ENCODE measurements at regions of chr16 and their contacts with region 1.

Region 1: GRCh38 chr16:23556881-23557778 is at the starts of genes EARS2 and UBFD1:
- DNase-seq: peak; percentile 99
- ATAC-seq: peak; percentile 87
- H3K4me3 ChIP-seq: peak within 1 kb of the TSS; percentile 60 to 90 (median 86)
- H3K4me3 Mint-ChIP-seq: peak within 1 kb of the TSS; percentile 93
- H3K27ac ChIP-seq: peak within 1 kb of the TSS; percentile 70 to 74
- H3K27ac Mint-ChIP-seq: peak within 1 kb of the TSS; percentile 93
- H3K4me1 ChIP-seq: peaks cover 11 to 20% of the 10 kb centered on the region in 2 donors
- H3K4me1 Mint-ChIP-seq: peaks cover 34% of the 10 kb centered on the region
- H3K27me3 ChIP-seq: no peaks in the 10 kb centered on the region
- H3K27me3 Mint-ChIP-seq: no peaks in the 10 kb centered on the region
- CTCF ChIP-seq: peak; percentile 79
- total RNA-seq, gene EARS2: 14.6 and 14.7 TPM in 2 replicates
- total RNA-seq, gene UBFD1: 47.3 and 49.2 TPM in 2 replicates

Region 2: GRCh38 chr16:23452572-23453337 is 104.4 kb before region 1 on chr16 and contains the start of gene COG7:
- CTCF ChIA-PET with region 1: no interaction called
- POLR2A ChIA-PET with region 1: no interaction called
- intact Hi-C with region 1: loop called (anchors 1 kb)
- DNase-seq: peak; percentile 92
- ATAC-seq: peak; percentile 90
- H3K4me3 ChIP-seq: peak within 1 kb of the TSS; percentile 67 to 99 (median 89)
- H3K4me3 Mint-ChIP-seq: peak within 1 kb of the TSS; percentile 91
- H3K27ac ChIP-seq: peak within 1 kb of the TSS in 1 of 2 donors; percentile 67
- H3K27ac Mint-ChIP-seq: peak within 1 kb of the TSS; percentile 90
- H3K4me1 ChIP-seq: peaks cover 11 to 13% of the 10 kb centered on the region in 2 donors
- H3K4me1 Mint-ChIP-seq: peaks cover 24% of the 10 kb centered on the region
- H3K27me3 ChIP-seq: no peaks in the 10 kb centered on the region
- H3K27me3 Mint-ChIP-seq: no peaks in the 10 kb centered on the region
- CTCF ChIP-seq: no peak
- total RNA-seq, gene COG7: 21.3 and 23.3 TPM in 2 replicates

Region 3: GRCh38 chr16:23504451-23505179 is 52.5 kb before region 1 on chr16:
- CTCF ChIA-PET with region 1: interaction called, 13 read pairs
- POLR2A ChIA-PET with region 1: interaction called, 9 read pairs
- intact Hi-C with region 1: loop called (anchors 1 kb)
- DNase-seq: peak; percentile 66
- ATAC-seq: peak; percentile 56
- H3K4me3 ChIP-seq: peak overlapping the region in 4 of 5 experiments; percentile 1 to 91 (median 78)
- H3K4me3 Mint-ChIP-seq: peak overlapping the region; percentile 94
- H3K27ac ChIP-seq: peak overlapping the region; percentile 86 to 91
- H3K27ac Mint-ChIP-seq: peak overlapping the region; percentile 90
- H3K4me1 ChIP-seq: peaks cover 85 to 94% of the 10 kb centered on the region in 2 donors
- H3K4me1 Mint-ChIP-seq: peaks cover 87% of the 10 kb centered on the region
- H3K27me3 ChIP-seq: no peaks in the 10 kb centered on the region
- H3K27me3 Mint-ChIP-seq: no peaks in the 10 kb centered on the region
- CTCF ChIP-seq: no peak

Region 4: DNA sequence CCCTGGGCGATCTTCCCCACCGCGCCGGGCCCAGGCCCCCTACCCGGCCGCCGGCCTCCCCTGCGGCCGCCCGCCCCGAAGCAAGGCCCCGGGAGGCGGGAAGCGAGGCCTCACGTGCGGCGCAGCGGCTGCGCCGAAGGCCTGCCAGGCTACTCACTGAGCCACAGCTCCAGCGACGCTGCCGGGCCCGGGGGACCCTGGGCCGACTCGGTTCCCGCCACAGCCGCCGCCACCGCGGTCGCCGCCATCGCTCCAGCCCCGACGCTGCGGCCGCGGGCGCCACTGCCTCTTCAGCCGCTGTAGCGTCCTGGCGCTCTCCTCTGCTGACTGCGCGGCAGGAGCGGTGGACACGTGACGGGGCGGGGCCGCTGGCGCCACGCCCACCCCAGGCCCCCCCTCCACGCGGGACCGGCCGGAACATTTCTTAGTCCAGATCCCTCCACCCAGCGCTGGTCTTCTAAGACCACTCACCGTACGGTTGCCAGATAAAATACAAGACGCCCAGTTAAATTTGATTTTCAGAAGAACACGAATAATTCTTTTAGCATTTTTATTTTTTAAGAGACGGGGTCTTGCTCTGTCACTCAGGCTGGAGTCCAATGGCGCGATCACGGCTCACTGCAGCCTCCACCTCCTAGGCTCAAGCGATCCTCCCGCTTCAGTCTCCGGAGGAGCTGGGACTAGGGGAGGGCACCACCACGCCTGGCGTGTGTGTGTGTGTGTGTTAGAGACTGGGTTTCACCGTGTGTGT is 46.8 kb before region 1 on chr16 and contains the start of gene GGA2:
- CTCF ChIA-PET with region 1: interaction called, 13 read pairs
- POLR2A ChIA-PET with region 1: interaction called, 9 read pairs
- intact Hi-C with region 1: loop called (anchors 1 kb)
- DNase-seq: peak; percentile 91
- ATAC-seq: peak; percentile 78
- H3K4me3 ChIP-seq: peak within 1 kb of the TSS; percentile 75 to 95 (median 91)
- H3K4me3 Mint-ChIP-seq: peak within 1 kb of the TSS; percentile 94
- H3K27ac ChIP-seq: peak within 1 kb of the TSS; percentile 86 to 91
- H3K27ac Mint-ChIP-seq: peak within 1 kb of the TSS; percentile 90
- H3K4me1 ChIP-seq: peaks cover 29 to 49% of the 10 kb centered on the region in 2 donors
- H3K4me1 Mint-ChIP-seq: peaks cover 55% of the 10 kb centered on the region
- H3K27me3 ChIP-seq: no peaks in the 10 kb centered on the region
- H3K27me3 Mint-ChIP-seq: no peaks in the 10 kb centered on the region
- CTCF ChIP-seq: no peak
- total RNA-seq, gene GGA2: 832 and 865 TPM in 2 replicates

Region 5: GRCh38 chr16:23640931-23641765 is 84.0 kb after region 1 on chr16 and contains the starts of genes DCTN5 and PALB2:
- CTCF ChIA-PET with region 1: interaction called, 5 read pairs
- POLR2A ChIA-PET with region 1: no interaction called
- intact Hi-C with region 1: loop called (anchors 1 kb)
- DNase-seq: peak; percentile 91
- ATAC-seq: peak; percentile 95
- H3K4me3 ChIP-seq: peak within 1 kb of the TSS; percentile 89 to 100 (median 96)
- H3K4me3 Mint-ChIP-seq: peak within 1 kb of the TSS; percentile 99
- H3K27ac ChIP-seq: peak within 1 kb of the TSS; percentile 80 to 84
- H3K27ac Mint-ChIP-seq: peak within 1 kb of the TSS; percentile 98
- H3K4me1 ChIP-seq: peaks cover 13 to 20% of the 10 kb centered on the region in 2 donors
- H3K4me1 Mint-ChIP-seq: peaks cover 36% of the 10 kb centered on the region
- H3K27me3 ChIP-seq: no peaks in the 10 kb centered on the region
- H3K27me3 Mint-ChIP-seq: no peaks in the 10 kb centered on the region
- CTCF ChIP-seq: no peak
- total RNA-seq, gene DCTN5: 58.3 and 62.3 TPM in 2 replicates
- total RNA-seq, gene PALB2: 14.9 and 16.3 TPM in 2 replicates

Region 6: DNA sequence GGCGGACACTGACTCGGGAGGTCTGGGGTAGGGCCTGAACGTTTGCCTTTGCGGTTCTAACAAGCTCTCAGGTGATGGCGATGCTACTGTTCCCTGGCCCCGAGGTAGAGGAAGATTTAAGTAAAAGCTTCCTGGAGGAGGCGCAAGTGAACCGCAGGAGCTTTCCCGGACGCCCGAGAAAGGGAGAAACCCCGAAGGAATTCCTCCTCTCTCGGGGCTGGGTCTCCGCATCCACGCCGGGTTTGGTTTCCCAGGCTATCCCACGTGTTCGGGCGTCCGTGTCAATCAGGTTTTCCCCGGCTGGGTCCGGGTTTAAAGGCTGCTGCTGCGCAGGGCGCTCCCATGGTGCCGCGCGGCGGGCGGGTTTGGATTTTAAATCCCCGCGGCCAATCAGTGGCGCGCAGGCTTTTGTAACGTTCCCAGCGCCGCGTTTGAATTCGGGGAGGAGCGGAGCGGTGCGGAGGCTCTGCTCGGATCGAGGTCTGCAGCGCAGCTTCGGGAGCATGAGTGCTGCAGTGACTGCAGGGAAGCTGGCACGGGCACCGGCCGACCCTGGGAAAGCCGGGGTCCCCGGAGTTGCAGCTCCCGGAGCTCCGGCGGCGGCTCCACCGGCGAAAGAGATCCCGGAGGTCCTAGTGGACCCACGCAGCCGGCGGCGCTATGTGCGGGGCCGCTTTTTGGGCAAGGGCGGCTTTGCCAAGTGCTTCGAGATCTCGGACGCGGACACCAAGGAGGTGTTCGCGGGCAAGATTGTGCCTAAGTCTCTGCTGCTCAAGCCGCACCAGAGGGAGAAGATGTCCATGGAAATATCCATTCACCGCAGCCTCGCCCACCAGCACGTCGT is 121.5 kb after region 1 on chr16 and contains the start of gene PLK1:
- CTCF ChIA-PET with region 1: no interaction called
- POLR2A ChIA-PET with region 1: no interaction called
- intact Hi-C with region 1: no loop called
- DNase-seq: peak; percentile 66
- ATAC-seq: peak; percentile 87
- H3K4me3 ChIP-seq: peak within 1 kb of the TSS; percentile 56 to 73 (median 64)
- H3K4me3 Mint-ChIP-seq: peak within 1 kb of the TSS; percentile 90
- H3K27ac ChIP-seq: no peak within 1 kb of the TSS
- H3K27ac Mint-ChIP-seq: no peak within 1 kb of the TSS
- H3K4me1 ChIP-seq: peaks cover 12 to 15% of the 10 kb centered on the region in 2 donors
- H3K4me1 Mint-ChIP-seq: peaks cover 17% of the 10 kb centered on the region
- H3K27me3 ChIP-seq: peaks cover 0 to 13% (median 3%) of the 10 kb centered on the region in 4 experiments
- H3K27me3 Mint-ChIP-seq: no peaks in the 10 kb centered on the region
- CTCF ChIP-seq: peak; percentile 15
- total RNA-seq, gene PLK1: 2.7 and 3.0 TPM in 2 replicates

Measured in B cell (primary cell).